ENCODE measurements at regions of chr1 and their contacts with region 1.

Region 1: GRCh38 chr1:94672934-94673333 is 131.4 kb upstream of the F3 start:
- DNase-seq: no peak
- H3K4me3 ChIP-seq: no peak overlapping the region
- H3K4me3 Mint-ChIP-seq: no peak overlapping the region
- H3K27ac ChIP-seq: no peak overlapping the region
- H3K27ac Mint-ChIP-seq: no peak overlapping the region
- H3K4me1 ChIP-seq: peaks cover 7 to 11% of the 10 kb centered on the region in 2 donors
- H3K4me1 Mint-ChIP-seq: peaks cover 20% of the 10 kb centered on the region
- H3K27me3 ChIP-seq: no peaks in the 10 kb centered on the region
- H3K27me3 Mint-ChIP-seq: peaks cover 0 to 2% (median 0%) of the 10 kb centered on the region in 3 donors
- CTCF ChIP-seq: no peak

Region 2: DNA sequence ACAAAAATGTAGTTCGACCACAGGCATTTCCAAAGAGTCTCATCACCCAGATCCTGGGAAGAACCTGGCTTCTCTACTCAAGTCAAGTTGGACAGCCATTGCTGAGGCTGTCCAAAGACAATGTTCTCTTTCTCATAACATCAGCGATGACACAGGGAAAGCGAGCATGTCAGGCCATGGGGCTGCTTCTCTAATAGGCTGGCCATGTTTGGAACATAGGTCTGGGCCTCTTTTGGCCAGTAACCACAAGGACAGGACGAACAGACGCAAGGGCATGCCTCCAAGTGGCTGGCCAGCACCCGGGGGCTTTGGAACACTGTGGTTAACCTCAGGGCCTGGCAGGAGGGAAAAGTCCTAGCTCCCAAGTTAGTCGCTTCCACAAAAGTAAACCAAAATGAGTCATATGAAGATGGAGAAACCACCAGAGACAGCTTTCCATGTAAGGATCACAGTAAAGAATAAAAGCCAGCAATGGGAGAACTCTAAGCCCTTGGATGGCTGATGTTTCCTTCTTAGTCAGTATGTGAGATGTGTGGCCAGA is 66.7 kb after region 1 on chr1:
- intact Hi-C with region 1: loop called in 1 of 2 experiments (anchors 10 kb)
- DNase-seq: peak in 1 of 3 donors; percentile 38
- H3K4me3 ChIP-seq: no peak overlapping the region
- H3K4me3 Mint-ChIP-seq: no peak overlapping the region
- H3K27ac ChIP-seq: no peak overlapping the region
- H3K27ac Mint-ChIP-seq: peak overlapping the region in 3 of 7 donors; percentile 4 to 54 (median 16)
- H3K4me1 ChIP-seq: peaks cover 39 to 51% of the 10 kb centered on the region in 2 donors
- H3K4me1 Mint-ChIP-seq: peaks cover 60% of the 10 kb centered on the region
- H3K27me3 ChIP-seq: no peaks in the 10 kb centered on the region
- H3K27me3 Mint-ChIP-seq: peaks cover 0 to 2% (median 0%) of the 10 kb centered on the region in 3 donors
- CTCF ChIP-seq: no peak

Measured in CD14-positive monocyte (primary cell).